Adrenal gland (tissue), 19 donors: ENCODE measurements at regions of chr3 and their contacts with region 1.

Region 1: DNA sequence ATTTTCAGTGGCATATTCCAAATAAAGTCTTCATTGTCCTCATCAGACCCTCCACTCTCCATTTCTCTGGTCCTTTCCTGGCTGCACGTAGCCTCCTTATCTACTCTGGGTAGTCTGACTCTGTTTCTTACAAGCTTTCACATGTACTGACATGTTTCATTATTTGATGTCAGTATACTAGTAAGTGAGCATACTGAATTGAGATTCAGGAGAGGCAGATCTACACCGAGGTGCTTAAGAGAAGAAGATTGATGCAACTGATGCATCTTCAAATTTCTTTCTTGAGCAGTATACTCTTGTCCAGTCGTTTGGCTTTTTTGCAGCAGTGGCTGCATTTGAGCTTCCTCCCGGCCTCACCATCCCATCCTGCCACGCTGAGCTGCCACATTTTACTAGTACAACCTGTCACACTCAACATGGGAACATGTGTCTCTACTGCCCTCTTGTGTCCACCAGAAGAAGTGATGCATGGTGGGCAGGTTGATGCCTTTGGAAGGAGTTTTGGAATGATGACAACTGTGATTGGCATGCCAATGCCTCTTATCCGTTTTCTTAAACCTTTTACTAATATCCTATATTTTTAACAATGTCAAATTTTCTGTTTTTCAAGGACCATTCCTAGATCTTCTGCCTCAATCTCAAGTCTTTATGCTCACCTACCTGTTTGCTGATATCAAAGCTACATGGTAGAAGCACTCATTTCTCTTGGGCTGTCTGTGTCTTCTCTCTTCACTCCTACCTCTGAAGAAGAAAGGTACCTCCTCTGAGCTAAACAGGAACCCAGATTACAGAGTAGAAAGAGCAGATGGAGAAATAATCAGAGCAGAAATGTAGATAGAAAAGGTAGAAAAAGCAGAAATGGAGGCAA is 38.7 kb downstream of the GUCA1C start:
- DNase-seq: peak; percentile 28 to 83 (median 40)
- H3K4me3 ChIP-seq: no peak overlapping the region
- H3K27ac ChIP-seq: no peak overlapping the region
- H3K4me1 ChIP-seq: no peaks in the 10 kb centered on the region
- H3K27me3 ChIP-seq: no peaks in the 10 kb centered on the region
- CTCF ChIP-seq: peak; percentile 52 to 81 (median 74)
- POLR2A ChIP-seq: no peak

Region 2: GRCh38 chr3:108662130-108662738 is 252.8 kb before region 1 on chr3:
- intact Hi-C with region 1: loop called (anchors 5 to 10 kb)
- DNase-seq: peak in 5 of 7 donors; percentile 23 to 32 (median 27)
- H3K4me3 ChIP-seq: peak overlapping the region in 1 of 4 donors; percentile 29
- H3K27ac ChIP-seq: no peak overlapping the region
- H3K4me1 ChIP-seq: no peaks in the 10 kb centered on the region
- H3K27me3 ChIP-seq: no peaks in the 10 kb centered on the region
- CTCF ChIP-seq: peak; percentile 70 to 93 (median 81)
- POLR2A ChIP-seq: no peak

Region 3: DNA sequence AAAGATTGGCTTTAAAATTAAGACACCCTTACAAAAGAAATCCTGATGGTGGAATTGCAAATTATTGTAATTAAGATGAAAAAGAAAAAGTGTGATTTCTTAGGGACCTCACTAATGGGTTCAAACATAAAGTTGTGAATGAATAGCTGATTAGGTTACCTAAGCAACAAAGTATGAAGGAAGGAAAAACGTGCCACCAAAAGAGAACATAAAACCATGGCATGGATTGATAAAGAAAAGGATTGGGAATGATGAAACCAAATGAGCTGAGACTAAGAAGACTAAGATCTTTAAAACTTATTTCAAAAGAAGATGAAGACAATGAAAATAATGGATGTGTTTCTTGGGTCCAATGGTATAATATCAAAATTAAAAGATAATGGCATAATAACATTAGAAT is 70.8 kb after region 1 on chr3:
- intact Hi-C with region 1: no loop called
- DNase-seq: no peak
- H3K4me3 ChIP-seq: no peak overlapping the region
- H3K27ac ChIP-seq: no peak overlapping the region
- H3K4me1 ChIP-seq: no peaks in the 10 kb centered on the region
- H3K27me3 ChIP-seq: no peaks in the 10 kb centered on the region
- CTCF ChIP-seq: no peak
- POLR2A ChIP-seq: no peak